Calu3 (cell line): ENCODE measurements at regions of chr2 and their contacts with region 1.

Region 1: DNA sequence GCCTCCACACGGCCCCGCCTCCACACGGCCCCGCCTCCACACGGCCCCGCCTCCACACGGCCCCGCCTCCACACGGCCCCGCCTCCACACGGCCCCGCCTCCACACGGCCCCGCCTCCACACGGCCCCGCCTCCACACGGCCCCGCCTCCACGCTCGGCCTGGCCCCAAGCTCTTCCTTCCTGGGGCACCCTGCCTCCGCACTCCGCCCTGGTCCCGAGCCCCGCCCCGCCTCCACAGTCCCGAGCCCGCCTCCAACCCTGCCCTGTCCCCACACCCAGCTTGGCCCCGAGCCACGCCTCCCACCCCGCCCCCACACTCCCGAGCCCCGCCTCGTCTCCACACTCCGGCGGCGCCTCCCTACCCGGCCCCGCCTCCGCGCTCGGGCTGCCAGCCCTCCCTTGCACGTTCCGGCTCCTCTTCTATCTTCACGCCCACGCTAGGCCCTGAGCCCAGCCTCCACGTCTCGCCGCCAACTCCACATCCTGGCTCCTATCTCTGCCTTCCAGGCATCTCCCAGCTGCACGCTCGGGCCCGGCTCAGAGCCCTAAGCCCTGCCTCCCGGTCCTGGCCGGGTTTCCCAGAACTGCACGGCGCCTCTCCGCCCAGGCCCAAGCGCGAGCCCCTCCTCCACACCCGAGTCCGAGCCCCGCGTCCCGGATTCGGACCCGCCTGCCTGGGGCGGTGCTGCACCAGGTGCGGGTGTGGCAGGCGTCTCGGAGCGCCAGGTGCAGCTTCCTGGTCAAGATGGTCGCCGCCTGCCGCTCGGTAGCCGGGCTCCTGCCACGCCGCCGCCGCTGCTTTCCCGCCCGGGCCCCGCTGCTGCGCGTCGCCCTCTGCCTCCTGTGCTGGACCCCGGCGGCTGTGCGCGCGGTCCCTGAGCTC is at the start of gene TMEM87B:
- DNase-seq: peak; percentile 98
- H3K4me3 Mint-ChIP-seq: peak within 1 kb of the TSS; percentile 78
- H3K27ac Mint-ChIP-seq: peak within 1 kb of the TSS; percentile 80
- H3K4me1 Mint-ChIP-seq: peaks cover 25% of the 10 kb centered on the region
- H3K27me3 Mint-ChIP-seq: no peaks in the 10 kb centered on the region
- CTCF ChIP-seq: no peak
- total RNA-seq, gene TMEM87B: 35.0 and 37.0 TPM in 2 replicates

Region 2: GRCh38 chr2:112118148-112118547 is 63.1 kb after region 1 on chr2:
- CTCF ChIA-PET with region 1: no interaction called
- intact Hi-C with region 1: loop called (anchors 10 kb)
- DNase-seq: no peak
- H3K4me3 Mint-ChIP-seq: no peak overlapping the region
- H3K27ac Mint-ChIP-seq: no peak overlapping the region
- H3K4me1 Mint-ChIP-seq: no peaks in the 10 kb centered on the region
- H3K27me3 Mint-ChIP-seq: no peaks in the 10 kb centered on the region
- CTCF ChIP-seq: no peak